ENCODE measurements at regions of chr3 and their contacts with region 1.

Region 1: DNA sequence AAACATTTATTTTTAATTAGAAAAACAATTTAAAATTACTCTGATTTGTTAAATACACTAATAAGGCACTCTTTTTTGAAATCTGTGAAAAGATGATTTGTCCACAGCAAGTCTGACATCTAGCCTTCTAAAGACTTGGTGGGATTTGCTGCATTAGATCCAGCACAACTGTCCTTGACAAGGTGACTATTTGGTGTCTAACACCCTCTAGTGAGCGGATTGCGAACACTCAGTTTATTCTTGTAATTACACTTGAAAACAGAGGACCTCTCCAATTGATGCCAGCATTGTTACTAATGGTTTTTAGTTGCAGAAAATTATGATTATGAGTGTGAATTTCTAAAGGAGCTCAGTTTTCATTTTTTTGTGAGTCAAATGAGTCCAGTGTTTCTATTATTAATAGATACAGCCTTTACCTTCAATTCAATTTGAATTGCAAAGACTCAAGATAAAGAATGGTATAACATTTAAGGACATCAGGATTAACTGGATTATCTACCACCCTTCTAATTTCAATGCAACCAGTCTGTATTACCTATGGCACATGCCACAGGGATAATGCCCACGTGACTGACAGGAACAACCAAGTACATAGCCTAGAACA is 29.7 kb upstream of the STRIT1 start:
- DNase-seq: peak in 1 of 10 donors; percentile 15

Region 2: DNA sequence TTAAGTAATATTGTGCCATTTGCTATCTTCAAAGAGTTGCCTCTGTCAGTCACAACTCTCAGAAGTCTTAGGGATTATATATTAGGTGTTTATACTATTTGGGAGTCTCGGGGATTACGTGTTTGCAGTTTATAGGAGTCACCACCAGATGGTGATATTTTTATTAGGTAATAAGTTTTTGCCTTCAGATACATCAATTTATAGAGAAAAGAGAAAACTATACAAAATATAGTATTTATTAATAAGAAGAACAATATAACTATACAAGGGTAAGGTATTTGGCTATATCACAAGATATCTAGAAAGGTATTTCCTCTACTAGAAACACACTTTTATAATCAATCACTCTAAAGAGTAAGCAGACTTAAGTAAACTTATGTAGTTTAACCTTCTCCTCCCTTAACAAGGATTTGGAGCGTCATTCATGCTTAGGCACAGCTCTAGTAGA is 988.2 kb before region 1 on chr3:
- intact Hi-C with region 1: loop called (anchors 5 kb)
- DNase-seq: no peak

Region 3: DNA sequence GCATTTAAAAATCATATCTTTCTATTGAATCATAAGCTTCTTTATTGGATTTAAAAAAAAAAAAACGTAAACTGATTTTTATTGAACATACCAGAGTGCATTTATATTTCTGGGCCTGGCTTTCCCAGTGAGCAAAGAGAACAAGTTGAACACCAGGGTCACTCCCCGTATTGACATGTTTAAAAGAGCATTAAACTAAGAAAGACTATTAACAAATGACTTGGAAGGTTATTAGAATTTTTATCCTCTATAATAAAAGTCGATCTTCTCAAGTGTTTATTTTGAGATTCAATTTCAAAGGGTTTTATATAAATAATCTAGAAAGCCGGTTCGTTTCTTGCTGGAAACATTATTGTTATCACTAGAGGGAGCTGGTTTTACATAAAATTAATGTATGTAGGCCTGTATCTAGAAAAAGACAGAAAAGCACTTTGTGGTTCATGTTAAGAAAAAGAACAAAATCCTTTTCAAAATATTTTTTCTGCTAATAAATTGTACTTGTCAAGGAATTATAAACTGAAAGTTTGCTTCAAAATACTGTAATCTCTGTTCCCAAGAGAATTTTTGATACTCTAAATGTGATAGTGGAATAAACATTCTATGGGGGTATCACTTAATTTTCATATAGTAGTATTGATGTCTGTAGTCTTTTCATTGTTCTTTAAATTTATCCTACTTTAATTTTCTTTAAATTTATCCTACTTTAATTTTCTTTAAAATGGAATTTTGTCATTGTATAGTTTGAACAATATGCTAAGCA is 564.9 kb before region 1 on chr3:
- intact Hi-C with region 1: loop called (anchors 1 kb)
- DNase-seq: no peak